T-cell (primary cell): ENCODE measurements at regions of chr11 and their contacts with region 1.

Region 1: DNA sequence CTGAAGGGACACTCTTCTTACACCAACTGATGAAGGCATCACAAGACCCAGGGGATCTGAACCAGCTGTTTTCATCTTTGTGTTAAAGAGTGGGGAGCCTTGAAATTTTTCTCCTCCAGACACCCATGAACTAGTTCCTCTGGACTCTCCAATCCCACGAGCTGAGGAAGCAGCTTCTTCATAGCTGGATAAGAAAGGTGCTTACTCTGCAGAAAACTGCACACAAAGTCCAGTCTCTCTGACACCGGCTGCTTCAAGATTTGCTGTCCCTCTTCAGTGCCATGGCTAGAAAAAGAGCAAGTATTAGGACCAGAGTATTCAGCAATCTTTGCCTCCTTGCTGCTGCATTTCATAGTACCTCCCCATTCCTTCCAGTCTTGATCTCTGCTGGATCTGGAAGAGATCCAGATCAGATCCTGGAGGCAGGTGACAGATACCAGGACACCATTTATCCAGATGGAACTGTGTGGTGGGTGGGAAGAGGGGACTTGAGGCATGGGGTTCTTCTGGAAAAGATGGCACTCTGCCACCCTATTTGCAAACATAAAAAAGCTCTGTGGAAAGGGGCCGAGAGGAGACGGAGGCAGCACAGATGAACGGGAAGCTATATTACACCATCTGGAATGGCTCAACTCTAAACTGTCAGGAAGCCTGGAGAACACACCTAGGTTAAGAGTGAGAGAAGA is 25.5 kb downstream of the IL18BP start:
- DNase-seq: no peak
- ATAC-seq: no peak
- H3K4me3 ChIP-seq: no peak overlapping the region
- H3K4me3 Mint-ChIP-seq: no peak overlapping the region
- H3K27ac ChIP-seq: no peak overlapping the region
- H3K27ac Mint-ChIP-seq: no peak overlapping the region
- H3K4me1 ChIP-seq: peaks cover 4 to 5% of the 10 kb centered on the region in 2 experiments
- H3K4me1 Mint-ChIP-seq: peaks cover 37 to 40% (median 40%) of the 10 kb centered on the region in 3 donors
- H3K27me3 ChIP-seq: no peaks in the 10 kb centered on the region
- H3K27me3 Mint-ChIP-seq: no peaks in the 10 kb centered on the region

Region 2: DNA sequence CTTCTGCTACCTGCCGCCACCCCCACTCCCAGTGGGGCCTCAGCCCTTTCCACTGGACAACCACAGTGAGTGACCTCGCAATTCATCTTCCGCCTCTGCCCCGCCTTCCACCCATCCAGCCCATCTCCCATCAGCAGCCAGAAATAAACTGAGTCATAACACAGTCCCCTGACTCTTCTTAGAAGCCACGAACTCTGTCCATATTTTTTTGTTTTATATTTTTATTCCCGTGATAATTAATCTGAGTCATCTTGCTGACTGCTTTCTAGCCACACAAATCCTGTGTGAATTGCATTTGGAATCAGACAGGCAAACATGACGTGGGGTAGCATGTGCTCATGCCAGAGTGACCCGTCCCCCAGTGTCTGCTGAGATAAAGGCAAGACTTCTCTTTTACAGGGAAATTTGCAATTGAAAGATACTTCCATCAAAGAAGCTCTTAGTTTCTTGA is 1814.1 kb before region 1 on chr11:
- CTCF ChIA-PET with region 1: no interaction called
- POLR2A ChIA-PET with region 1: no interaction called
- DNase-seq: no peak
- ATAC-seq: no peak
- H3K4me3 ChIP-seq: no peak overlapping the region
- H3K4me3 Mint-ChIP-seq: no peak overlapping the region
- H3K27ac ChIP-seq: no peak overlapping the region
- H3K27ac Mint-ChIP-seq: peak overlapping the region; percentile 60 to 82
- H3K4me1 ChIP-seq: peaks cover 5 to 31% of the 10 kb centered on the region in 2 experiments
- H3K4me1 Mint-ChIP-seq: peaks cover 46 to 48% (median 47%) of the 10 kb centered on the region in 3 donors
- H3K27me3 ChIP-seq: no peaks in the 10 kb centered on the region
- H3K27me3 Mint-ChIP-seq: no peaks in the 10 kb centered on the region

Region 3: GRCh38 chr11:72040726-72041441 is 16.7 kb after region 1 on chr11:
- CTCF ChIA-PET with region 1: interaction called, 9 to 28 read pairs
- POLR2A ChIA-PET with region 1: no interaction called
- DNase-seq: peak; percentile 69 to 90 (median 78)
- ATAC-seq: peak; percentile 70 to 84 (median 72)
- H3K4me3 ChIP-seq: peak overlapping the region; percentile 78 to 81
- H3K4me3 Mint-ChIP-seq: no peak overlapping the region
- H3K27ac ChIP-seq: peak overlapping the region; percentile 92
- H3K27ac Mint-ChIP-seq: no peak overlapping the region
- H3K4me1 ChIP-seq: peaks cover 55 to 65% of the 10 kb centered on the region in 2 experiments
- H3K4me1 Mint-ChIP-seq: peaks cover 43 to 51% (median 50%) of the 10 kb centered on the region in 3 donors
- H3K27me3 ChIP-seq: no peaks in the 10 kb centered on the region
- H3K27me3 Mint-ChIP-seq: no peaks in the 10 kb centered on the region

Region 4: GRCh38 chr11:72080256-72080974 is 56.2 kb after region 1 on chr11 and contains the starts of genes LRRC51 and NUMA1:
- CTCF ChIA-PET with region 1: interaction called, 6 to 12 read pairs
- POLR2A ChIA-PET with region 1: interaction called in 1 of 2 experiments, 4 read pairs
- DNase-seq: peak; percentile 96 to 100 (median 99)
- ATAC-seq: peak; percentile 89 to 92 (median 91)
- H3K4me3 ChIP-seq: peak within 1 kb of the TSS; percentile 71 to 83
- H3K4me3 Mint-ChIP-seq: peak within 1 kb of the TSS; percentile 93 to 98 (median 93)
- H3K27ac ChIP-seq: peak within 1 kb of the TSS; percentile 78
- H3K27ac Mint-ChIP-seq: peak within 1 kb of the TSS; percentile 94 to 97
- H3K4me1 ChIP-seq: peaks cover 9 to 21% of the 10 kb centered on the region in 2 experiments
- H3K4me1 Mint-ChIP-seq: peaks cover 48 to 58% (median 50%) of the 10 kb centered on the region in 3 donors
- H3K27me3 ChIP-seq: no peaks in the 10 kb centered on the region
- H3K27me3 Mint-ChIP-seq: no peaks in the 10 kb centered on the region
- total RNA-seq, gene LRRC51: 2.5 to 5.1 (median 3.7) TPM
- total RNA-seq, gene NUMA1: 237 to 386 (median 343) TPM

Region 5: DNA sequence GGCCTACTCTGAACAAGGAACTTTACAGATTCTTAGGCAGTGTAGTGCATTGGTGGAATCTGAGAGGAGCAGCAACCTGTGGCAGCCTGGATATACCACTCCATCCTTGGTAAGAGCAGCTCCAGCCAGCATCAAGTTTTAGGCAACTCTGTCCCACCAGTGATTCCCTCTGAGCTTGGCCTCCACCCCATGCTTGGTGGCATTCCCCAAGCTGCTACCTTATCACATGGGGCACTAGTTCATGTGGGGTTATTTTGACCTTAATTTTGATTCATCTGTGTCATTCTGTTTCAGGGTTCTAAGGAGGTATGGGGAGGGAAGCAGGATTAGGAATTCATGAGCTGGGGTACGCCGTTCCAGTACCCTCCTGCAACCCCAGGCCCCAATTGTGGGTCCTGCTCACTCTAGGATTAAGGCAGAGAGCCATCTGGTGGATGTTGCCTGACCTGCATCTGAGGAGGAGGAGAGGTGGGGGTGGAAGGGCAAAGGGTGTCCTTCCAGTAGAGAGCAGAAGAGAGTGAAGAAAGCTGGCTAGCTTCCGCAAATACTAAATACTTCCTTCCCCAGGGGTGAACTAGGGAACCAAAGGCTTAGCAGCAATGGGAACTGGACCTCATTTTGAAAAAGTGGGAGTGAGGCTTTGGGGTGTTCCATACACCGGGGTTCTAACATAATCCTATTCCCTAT is 66.9 kb after region 1 on chr11:
- CTCF ChIA-PET with region 1: interaction called, 24 to 40 read pairs
- POLR2A ChIA-PET with region 1: interaction called in 1 of 2 experiments, 3 read pairs
- DNase-seq: peak; percentile 43 to 82 (median 67)
- ATAC-seq: peak; percentile 89 to 99 (median 90)
- H3K4me3 ChIP-seq: no peak overlapping the region
- H3K4me3 Mint-ChIP-seq: no peak overlapping the region
- H3K27ac ChIP-seq: no peak overlapping the region
- H3K27ac Mint-ChIP-seq: peak overlapping the region; percentile 6 to 70
- H3K4me1 ChIP-seq: peaks cover 0 to 4% of the 10 kb centered on the region in 2 experiments
- H3K4me1 Mint-ChIP-seq: peaks cover 10 to 12% (median 11%) of the 10 kb centered on the region in 3 donors
- H3K27me3 ChIP-seq: no peaks in the 10 kb centered on the region
- H3K27me3 Mint-ChIP-seq: no peaks in the 10 kb centered on the region

Region 6: DNA sequence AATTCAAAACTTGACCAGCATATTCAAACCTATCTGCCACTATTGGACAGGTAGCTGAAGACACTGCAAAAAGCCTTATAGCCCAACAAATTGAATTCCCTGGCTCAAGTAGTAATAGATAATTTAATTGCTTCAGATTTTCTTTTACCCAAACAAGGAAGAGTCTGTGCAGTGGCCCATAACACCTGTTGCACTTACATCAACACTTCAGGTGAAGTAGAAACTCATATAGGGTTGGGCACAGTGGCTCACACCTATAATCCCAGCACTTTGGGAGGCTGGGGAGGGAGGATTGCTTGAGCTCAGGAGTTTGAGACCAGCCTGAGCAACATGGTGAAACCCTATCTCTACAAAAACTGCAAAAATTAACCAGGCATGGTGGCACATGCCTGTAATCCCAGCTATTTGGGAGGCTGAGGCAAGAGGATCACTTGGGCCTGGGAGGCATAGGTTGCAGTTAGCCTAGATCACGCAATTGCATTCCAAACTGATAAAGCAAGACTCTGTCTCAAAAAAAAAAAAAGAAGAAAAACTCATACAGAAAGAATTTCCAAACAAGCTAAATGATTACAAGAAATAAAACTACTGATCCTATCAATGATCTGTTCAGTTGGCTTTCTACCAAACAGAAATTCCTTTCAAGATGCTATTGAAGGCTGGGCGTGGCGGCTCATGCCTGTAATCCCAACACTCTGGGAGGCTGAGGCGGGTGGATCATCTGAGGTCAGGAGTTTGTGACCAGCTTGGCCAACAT is 120.8 kb after region 1 on chr11:
- CTCF ChIA-PET with region 1: interaction called, 5 to 31 read pairs
- POLR2A ChIA-PET with region 1: interaction called in 1 of 2 experiments, 7 read pairs
- DNase-seq: no peak
- ATAC-seq: no peak
- H3K4me3 ChIP-seq: no peak overlapping the region
- H3K4me3 Mint-ChIP-seq: no peak overlapping the region
- H3K27ac ChIP-seq: no peak overlapping the region
- H3K27ac Mint-ChIP-seq: no peak overlapping the region
- H3K4me1 ChIP-seq: peaks cover 0 to 3% of the 10 kb centered on the region in 2 experiments
- H3K4me1 Mint-ChIP-seq: peaks cover 4 to 14% (median 10%) of the 10 kb centered on the region in 3 donors
- H3K27me3 ChIP-seq: peaks cover 0 to 4% of the 10 kb centered on the region in 2 experiments
- H3K27me3 Mint-ChIP-seq: peaks cover 12 to 15% of the 10 kb centered on the region in 2 donors